ENCODE measurements at regions of chr1 and their contacts with region 1.

Region 1: GRCh38 chr1:39720094-39720999 is 18.3 kb upstream of the PPIE start:
- DNase-seq: no peak
- H3K4me3 ChIP-seq: no peak overlapping the region
- H3K27ac ChIP-seq: no peak overlapping the region
- H3K4me1 ChIP-seq: no peaks in the 10 kb centered on the region
- H3K27me3 ChIP-seq: peaks cover 31 to 66% (median 45%) of the 10 kb centered on the region in 4 experiments
- CTCF ChIP-seq: peak in 2 of 3 experiments; percentile 29 to 44; a peak in 2 of 4 replicates
- EP300 ChIP-seq: no peak
- POLR2A ChIP-seq: no peak
- RAD21 ChIP-seq: peak; percentile 66 to 77

Region 2: DNA sequence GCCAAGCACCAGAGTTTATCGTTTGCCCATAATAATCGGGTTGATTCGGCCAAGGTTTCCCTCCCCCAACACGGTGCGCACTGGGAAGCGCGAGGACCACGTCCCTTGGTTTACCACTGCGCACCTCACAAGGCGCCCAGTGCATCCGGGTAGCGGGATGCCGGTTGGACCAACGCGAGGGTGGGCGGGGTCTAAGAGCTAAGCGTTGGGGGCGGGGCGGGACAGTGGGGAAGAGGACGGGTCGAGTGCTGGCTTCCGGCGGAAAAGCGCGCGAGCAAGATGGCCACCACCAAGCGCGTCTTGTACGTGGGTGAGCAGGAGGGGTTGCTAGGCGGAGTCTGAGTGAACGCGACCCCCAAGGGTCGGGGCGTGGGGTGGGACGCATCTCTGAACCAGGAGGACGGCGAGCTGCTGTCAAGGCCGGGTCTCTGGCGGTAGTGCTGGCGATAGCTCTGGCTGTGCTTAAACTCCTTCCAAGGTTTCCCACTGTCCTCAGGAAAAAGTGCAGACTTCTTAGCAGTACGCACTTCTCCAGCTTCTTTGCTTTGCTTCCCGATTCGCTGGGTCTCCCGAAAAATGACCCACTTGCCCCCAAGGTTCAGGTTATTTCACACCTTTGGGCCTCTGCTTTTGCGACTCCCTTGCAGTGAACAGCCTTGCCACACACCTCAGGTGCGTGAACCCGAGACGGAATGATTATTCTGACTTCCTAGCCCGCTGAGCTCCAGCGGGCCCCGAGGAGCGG is 18.4 kb after region 1 on chr1 and contains the start of gene PPIE:
- CTCF ChIA-PET with region 1: interaction called, 10 read pairs
- POLR2A ChIA-PET with region 1: interaction called, 3 read pairs
- DNase-seq: peak; percentile 79 to 91
- H3K4me3 ChIP-seq: peak within 1 kb of the TSS; percentile 85 to 97 (median 90)
- H3K27ac ChIP-seq: peak within 1 kb of the TSS; percentile 81
- H3K4me1 ChIP-seq: peaks cover 0 to 7% (median 2%) of the 10 kb centered on the region in 4 experiments; a peak in 3 of 7 replicates
- H3K27me3 ChIP-seq: peaks cover 2 to 40% (median 20%) of the 10 kb centered on the region in 4 experiments
- CTCF ChIP-seq: no peak
- EP300 ChIP-seq: no peak
- POLR2A ChIP-seq: peak in 1 of 2 experiments; percentile 84; a peak in 2 of 3 replicates
- RAD21 ChIP-seq: no peak
- total RNA-seq, gene PPIE: 38.9 and 40.2 TPM in 2 replicates

Measured in H1 (cell line).